H1 (cell line): ENCODE measurements at regions of chr6 and their contacts with region 1.

Region 1: DNA sequence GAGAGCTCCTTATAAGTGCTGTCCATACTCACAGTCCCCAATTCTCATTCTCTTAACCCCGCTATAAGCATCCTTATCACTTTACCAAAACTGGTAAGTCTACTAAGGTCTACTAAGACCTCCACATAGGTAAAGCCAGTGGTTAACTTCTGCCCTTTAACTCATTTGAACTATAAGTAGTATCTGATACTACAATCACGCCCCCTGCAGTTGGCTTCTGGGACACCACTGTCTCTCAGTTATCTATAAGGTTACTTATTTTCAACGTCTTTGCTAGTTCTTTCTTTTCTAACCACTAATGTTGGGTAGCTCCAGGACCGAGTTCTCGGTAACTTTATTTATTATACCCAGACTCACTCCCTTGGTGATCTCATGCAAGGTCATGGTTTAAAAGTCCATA is 142.6 kb downstream of the ARHGAP18 start:
- DNase-seq: peak; percentile 29 to 81
- H3K4me3 ChIP-seq: no peak overlapping the region
- H3K27ac ChIP-seq: no peak overlapping the region
- H3K4me1 ChIP-seq: no peaks in the 10 kb centered on the region; a peak in 1 of 7 replicates
- H3K27me3 ChIP-seq: no peaks in the 10 kb centered on the region
- CTCF ChIP-seq: peak in 2 of 3 experiments; percentile 47 to 66; a peak in 2 of 4 replicates
- EP300 ChIP-seq: no peak
- POLR2A ChIP-seq: no peak
- RAD21 ChIP-seq: peak; percentile 54 to 59

Region 2: GRCh38 chr6:129490521-129491245 is 76.7 kb before region 1 on chr6:
- CTCF ChIA-PET with region 1: interaction called, 21 read pairs
- POLR2A ChIA-PET with region 1: no interaction called
- DNase-seq: no peak
- H3K4me3 ChIP-seq: no peak overlapping the region
- H3K27ac ChIP-seq: no peak overlapping the region
- H3K4me1 ChIP-seq: peaks cover 0 to 3% (median 0%) of the 10 kb centered on the region in 4 experiments; a peak in 1 of 7 replicates
- H3K27me3 ChIP-seq: peaks cover 0 to 1% (median 0%) of the 10 kb centered on the region in 4 experiments; a peak in 1 of 7 replicates
- CTCF ChIP-seq: no peak
- EP300 ChIP-seq: no peak
- POLR2A ChIP-seq: no peak
- RAD21 ChIP-seq: no peak

Region 3: GRCh38 chr6:129555206-129555832 is 12.1 kb before region 1 on chr6:
- CTCF ChIA-PET with region 1: interaction called, 43 read pairs
- POLR2A ChIA-PET with region 1: no interaction called
- DNase-seq: no peak
- H3K4me3 ChIP-seq: no peak overlapping the region
- H3K27ac ChIP-seq: no peak overlapping the region
- H3K4me1 ChIP-seq: no peaks in the 10 kb centered on the region
- H3K27me3 ChIP-seq: no peaks in the 10 kb centered on the region
- CTCF ChIP-seq: no peak
- EP300 ChIP-seq: no peak
- POLR2A ChIP-seq: no peak
- RAD21 ChIP-seq: peak; percentile 35 to 36; a peak in 3 of 4 replicates